ENCODE measurements at regions of chr12 and their contacts with region 1.

Region 1: DNA sequence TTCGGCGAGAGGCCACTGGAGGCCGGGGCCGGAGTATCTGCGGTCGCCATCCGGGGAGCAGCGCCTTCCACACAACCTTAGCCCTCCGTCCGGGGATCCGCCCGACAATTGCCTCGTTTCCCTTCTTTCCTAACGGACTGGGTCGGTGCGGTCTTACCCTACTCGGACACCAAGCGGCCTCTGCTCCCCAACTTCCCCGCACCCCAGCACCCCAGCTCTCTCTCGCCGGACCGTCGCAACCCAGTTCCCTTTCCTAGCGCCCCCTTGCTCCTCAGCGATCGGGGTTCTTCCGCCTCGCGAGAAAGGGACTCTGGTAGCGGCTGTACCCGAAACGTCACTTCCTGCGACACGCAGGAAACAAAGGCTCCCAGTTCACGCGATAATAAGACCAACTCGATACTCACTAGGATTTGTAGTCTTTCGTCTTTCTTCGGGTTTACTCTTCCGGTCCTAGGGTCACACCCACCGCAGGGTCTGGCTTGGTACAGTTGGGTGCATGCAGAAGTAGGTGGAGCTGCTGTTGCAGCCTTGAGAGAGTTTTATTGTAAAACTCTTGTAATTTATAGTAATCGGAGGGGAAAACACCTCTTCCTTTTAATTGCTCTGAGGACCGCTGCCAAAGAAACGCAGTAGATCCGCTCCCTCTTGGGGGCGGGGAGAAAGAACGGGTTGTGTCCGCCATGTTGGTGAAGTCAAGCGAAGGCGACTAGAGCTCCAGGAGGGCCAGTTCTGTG is at the start of gene ZFC3H1:
- DNase-seq: peak; percentile 92 to 97
- H3K4me3 ChIP-seq: peak within 1 kb of the TSS; percentile 91 to 95
- H3K27ac ChIP-seq: peak within 1 kb of the TSS; percentile 96 to 98
- H3K4me1 ChIP-seq: peaks cover 0 to 17% of the 10 kb centered on the region in 2 donors
- H3K27me3 ChIP-seq: no peaks in the 10 kb centered on the region
- CTCF ChIP-seq: peak in 2 of 3 experiments; percentile 24 to 32
- total RNA-seq, gene ZFC3H1: 15.8 TPM

Region 2: DNA sequence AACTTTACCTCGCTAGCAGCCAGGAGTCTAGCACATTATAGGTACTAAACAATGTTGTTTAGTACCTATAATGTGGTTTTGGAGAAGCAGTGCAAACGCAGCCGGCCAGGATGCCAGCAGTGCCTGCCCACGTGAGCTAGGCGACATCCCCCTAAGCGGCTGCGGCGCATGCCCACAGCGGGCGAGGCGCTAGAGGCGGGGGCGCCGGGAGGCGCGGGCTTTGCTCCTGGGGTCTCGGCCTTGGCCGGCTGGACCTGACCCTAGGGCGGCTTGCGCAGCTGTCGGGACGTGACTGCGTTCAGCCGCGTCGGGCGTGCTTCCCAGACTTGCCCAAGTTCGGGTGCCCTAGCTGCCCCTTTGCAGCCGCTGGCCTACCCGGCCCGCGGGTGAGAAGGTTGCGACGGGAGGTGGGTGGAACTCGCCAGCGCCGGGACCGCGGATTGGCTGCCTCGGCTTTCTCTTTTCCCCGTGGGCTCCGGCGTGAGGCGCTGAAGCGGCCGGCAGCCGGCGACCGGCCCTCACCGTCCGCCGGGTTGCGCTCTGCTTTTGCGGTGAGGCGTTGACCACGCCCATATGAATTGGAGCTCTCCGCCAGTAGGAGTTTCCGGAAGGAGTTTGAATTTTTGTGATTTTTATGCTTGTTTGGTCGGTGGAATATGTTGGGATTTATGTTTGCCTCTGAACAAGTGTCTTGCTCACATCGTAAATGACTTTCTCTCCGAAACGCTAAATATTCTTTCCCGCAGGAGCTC is 22.4 kb after region 1 on chr12 and contains the start of gene TMEM19:
- intact Hi-C with region 1: loop called (anchors 1 kb)
- DNase-seq: peak; percentile 69 to 93
- H3K4me3 ChIP-seq: peak within 1 kb of the TSS; percentile 68 to 92
- H3K27ac ChIP-seq: peak within 1 kb of the TSS; percentile 73 to 81
- H3K4me1 ChIP-seq: peaks cover 0 to 10% of the 10 kb centered on the region in 2 donors
- H3K27me3 ChIP-seq: no peaks in the 10 kb centered on the region
- CTCF ChIP-seq: peak in 1 of 3 experiments; percentile 38
- total RNA-seq, gene TMEM19: 14.5 TPM